MCF 10A (cell line): ENCODE measurements at regions of chr2 and their contacts with region 1.

Region 1: GRCh38 chr2:10408649-10409579 is 39.2 kb downstream of the ODC1 start:
- DNase-seq: peak; percentile 90
- H3K4me3 Mint-ChIP-seq: peak overlapping the region; percentile 58
- H3K27ac Mint-ChIP-seq: peak overlapping the region; percentile 72
- H3K4me1 Mint-ChIP-seq: peaks cover 53% of the 10 kb centered on the region
- H3K27me3 Mint-ChIP-seq: no peaks in the 10 kb centered on the region
- CTCF ChIP-seq: peak; percentile 97

Region 2: GRCh38 chr2:10129490-10129889 is 279.4 kb before region 1 on chr2:
- CTCF ChIA-PET with region 1: interaction called, 126 read pairs
- POLR2A ChIA-PET with region 1: interaction called, 58 read pairs
- intact Hi-C with region 1: loop called (anchors 1 kb)
- DNase-seq: no peak
- H3K4me3 Mint-ChIP-seq: no peak overlapping the region
- H3K27ac Mint-ChIP-seq: peak overlapping the region; percentile 36
- H3K4me1 Mint-ChIP-seq: peaks cover 26% of the 10 kb centered on the region
- H3K27me3 Mint-ChIP-seq: no peaks in the 10 kb centered on the region
- CTCF ChIP-seq: no peak

Region 3: GRCh38 chr2:10172033-10172871 is 236.7 kb before region 1 on chr2:
- CTCF ChIA-PET with region 1: no interaction called
- POLR2A ChIA-PET with region 1: no interaction called
- intact Hi-C with region 1: no loop called
- DNase-seq: no peak
- H3K4me3 Mint-ChIP-seq: no peak overlapping the region
- H3K27ac Mint-ChIP-seq: no peak overlapping the region
- H3K4me1 Mint-ChIP-seq: peaks cover 5% of the 10 kb centered on the region
- H3K27me3 Mint-ChIP-seq: no peaks in the 10 kb centered on the region
- CTCF ChIP-seq: no peak

Region 4: GRCh38 chr2:10269711-10270610 is 139.0 kb before region 1 on chr2:
- CTCF ChIA-PET with region 1: interaction called, 5 read pairs
- POLR2A ChIA-PET with region 1: no interaction called
- intact Hi-C with region 1: loop called (anchors 1 kb)
- DNase-seq: no peak
- H3K4me3 Mint-ChIP-seq: no peak overlapping the region
- H3K27ac Mint-ChIP-seq: peak overlapping the region; percentile 54
- H3K4me1 Mint-ChIP-seq: peaks cover 19% of the 10 kb centered on the region
- H3K27me3 Mint-ChIP-seq: no peaks in the 10 kb centered on the region
- CTCF ChIP-seq: no peak

Region 5: GRCh38 chr2:10352361-10352760 is 56.6 kb before region 1 on chr2:
- CTCF ChIA-PET with region 1: interaction called, 10 read pairs
- POLR2A ChIA-PET with region 1: no interaction called
- intact Hi-C with region 1: no loop called
- DNase-seq: no peak
- H3K4me3 Mint-ChIP-seq: no peak overlapping the region
- H3K27ac Mint-ChIP-seq: no peak overlapping the region
- H3K4me1 Mint-ChIP-seq: peaks cover 23% of the 10 kb centered on the region
- H3K27me3 Mint-ChIP-seq: no peaks in the 10 kb centered on the region
- CTCF ChIP-seq: no peak

Region 6: DNA sequence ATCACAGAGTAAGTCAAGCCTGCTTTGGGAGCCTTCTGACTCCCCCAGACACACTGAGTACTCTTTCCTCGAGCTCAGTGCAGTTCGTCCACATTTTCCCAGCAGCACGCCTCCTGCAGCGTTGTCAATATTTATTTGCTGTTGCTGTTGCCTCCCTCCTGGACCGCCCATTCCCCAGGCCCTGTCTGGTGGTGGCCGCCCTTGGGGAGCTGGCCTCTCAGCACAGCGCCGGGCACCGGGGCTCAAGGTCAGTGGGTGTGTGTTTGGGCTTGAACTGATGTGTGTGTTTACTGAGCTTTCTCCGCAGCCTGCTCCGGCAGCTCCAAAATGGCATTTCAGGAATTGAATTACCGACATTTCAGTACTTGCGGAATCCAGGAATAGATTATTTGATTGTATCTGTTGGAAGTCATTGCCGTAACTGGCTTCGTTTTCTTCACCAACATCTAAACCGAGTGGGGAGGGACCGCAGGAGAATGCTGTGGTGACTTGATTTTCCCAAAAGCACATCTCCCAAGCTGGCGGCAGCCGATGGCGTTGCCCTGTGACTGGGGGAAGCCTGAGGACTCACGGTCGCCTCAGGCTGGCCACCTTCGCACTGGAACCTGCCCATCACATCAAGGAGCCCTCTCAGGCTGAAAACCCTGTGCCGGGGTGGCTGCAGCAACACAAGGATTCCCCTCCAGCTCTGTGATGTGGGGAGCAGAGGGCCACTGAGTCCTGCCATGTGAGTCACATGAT is 40.3 kb before region 1 on chr2:
- CTCF ChIA-PET with region 1: no interaction called
- POLR2A ChIA-PET with region 1: no interaction called
- intact Hi-C with region 1: no loop called
- DNase-seq: no peak
- H3K4me3 Mint-ChIP-seq: no peak overlapping the region
- H3K27ac Mint-ChIP-seq: peak overlapping the region; percentile 25
- H3K4me1 Mint-ChIP-seq: peaks cover 15% of the 10 kb centered on the region
- H3K27me3 Mint-ChIP-seq: no peaks in the 10 kb centered on the region
- CTCF ChIP-seq: no peak

Region 7: GRCh38 chr2:10424051-10424450 is 15.1 kb after region 1 on chr2:
- CTCF ChIA-PET with region 1: interaction called, 42 read pairs
- POLR2A ChIA-PET with region 1: interaction called, 6 read pairs
- intact Hi-C with region 1: no loop called
- DNase-seq: no peak
- H3K4me3 Mint-ChIP-seq: no peak overlapping the region
- H3K27ac Mint-ChIP-seq: no peak overlapping the region
- H3K4me1 Mint-ChIP-seq: no peaks in the 10 kb centered on the region
- H3K27me3 Mint-ChIP-seq: no peaks in the 10 kb centered on the region
- CTCF ChIP-seq: no peak